ENCODE measurements at regions of chr5 and their contacts with region 1.

Region 1: GRCh38 chr5:138035605-138036537 is 3.0 kb upstream of the FAM13B start:
- DNase-seq: peak; percentile 74
- ATAC-seq: peak; percentile 74
- H3K4me3 Mint-ChIP-seq: no peak overlapping the region
- H3K27ac Mint-ChIP-seq: no peak overlapping the region
- H3K4me1 Mint-ChIP-seq: peaks cover 26% of the 10 kb centered on the region
- H3K27me3 Mint-ChIP-seq: no peaks in the 10 kb centered on the region

Region 2: GRCh38 chr5:137580030-137580429 is 455.8 kb before region 1 on chr5:
- CTCF ChIA-PET with region 1: no interaction called
- POLR2A ChIA-PET with region 1: no interaction called
- intact Hi-C with region 1: no loop called
- DNase-seq: no peak
- ATAC-seq: no peak
- H3K4me3 Mint-ChIP-seq: no peak overlapping the region
- H3K27ac Mint-ChIP-seq: no peak overlapping the region
- H3K4me1 Mint-ChIP-seq: no peaks in the 10 kb centered on the region
- H3K27me3 Mint-ChIP-seq: peaks cover 7% of the 10 kb centered on the region

Region 3: GRCh38 chr5:137754126-137754960 is 281.5 kb before region 1 on chr5 and contains the start of gene HNRNPA0:
- CTCF ChIA-PET with region 1: interaction called, 3 read pairs
- POLR2A ChIA-PET with region 1: no interaction called
- intact Hi-C with region 1: loop called (anchors 1 to 2 kb)
- DNase-seq: peak; percentile 98
- ATAC-seq: peak; percentile 87
- H3K4me3 Mint-ChIP-seq: peak within 1 kb of the TSS; percentile 77
- H3K27ac Mint-ChIP-seq: peak within 1 kb of the TSS; percentile 97
- H3K4me1 Mint-ChIP-seq: peaks cover 28% of the 10 kb centered on the region
- H3K27me3 Mint-ChIP-seq: no peaks in the 10 kb centered on the region
- total RNA-seq, gene HNRNPA0: 18.9 to 32.1 TPM

Region 4: DNA sequence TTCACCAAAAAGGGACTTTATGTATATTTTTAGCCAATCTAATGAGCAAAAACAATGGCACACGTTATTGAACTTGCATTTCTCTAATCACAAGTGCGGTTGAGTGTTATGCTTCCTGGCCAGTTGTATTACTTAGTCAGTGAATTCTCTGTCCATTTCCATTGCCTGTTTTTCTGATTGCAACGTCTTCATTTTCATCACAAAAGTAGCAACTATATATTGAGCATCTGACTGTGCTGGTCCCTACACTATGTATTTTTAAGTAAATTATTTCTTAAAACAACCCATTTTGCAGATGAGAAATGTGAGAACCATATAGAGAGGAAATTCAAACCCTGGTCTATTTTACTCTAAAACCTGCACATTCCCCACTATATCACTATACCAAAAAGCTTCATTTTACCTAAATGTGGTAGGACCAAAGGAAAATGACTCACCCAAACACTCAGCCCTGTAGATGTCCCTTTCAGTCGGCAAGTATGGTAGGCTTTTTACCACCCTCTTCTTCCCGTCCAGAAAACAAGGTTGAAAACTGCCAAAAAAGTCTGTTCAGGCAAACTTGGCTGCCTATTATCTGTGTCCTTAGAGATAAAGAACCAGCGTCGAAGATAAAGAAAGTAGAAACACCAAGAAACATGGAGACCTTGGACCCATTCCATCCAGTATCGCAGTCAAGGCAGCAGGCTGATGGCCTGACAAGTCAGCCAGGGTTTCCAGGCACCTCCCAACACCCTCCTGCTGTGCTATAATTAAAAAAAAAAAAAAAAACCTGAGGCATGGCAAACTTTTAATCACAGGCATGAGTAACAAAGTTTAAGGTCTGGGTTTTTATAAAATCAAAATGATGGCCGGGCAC is 15.8 kb after region 1 on chr5:
- CTCF ChIA-PET with region 1: interaction called, 10 read pairs
- POLR2A ChIA-PET with region 1: no interaction called
- intact Hi-C with region 1: no loop called
- DNase-seq: no peak
- ATAC-seq: no peak
- H3K4me3 Mint-ChIP-seq: no peak overlapping the region
- H3K27ac Mint-ChIP-seq: no peak overlapping the region
- H3K4me1 Mint-ChIP-seq: peaks cover 10% of the 10 kb centered on the region
- H3K27me3 Mint-ChIP-seq: peaks cover 6% of the 10 kb centered on the region

Region 5: GRCh38 chr5:138128334-138128733 is 92.5 kb after region 1 on chr5:
- CTCF ChIA-PET with region 1: interaction called, 21 read pairs
- POLR2A ChIA-PET with region 1: no interaction called
- intact Hi-C with region 1: loop called (anchors 1 kb)
- DNase-seq: no peak
- ATAC-seq: no peak
- H3K4me3 Mint-ChIP-seq: no peak overlapping the region
- H3K27ac Mint-ChIP-seq: no peak overlapping the region
- H3K4me1 Mint-ChIP-seq: peaks cover 2% of the 10 kb centered on the region
- H3K27me3 Mint-ChIP-seq: no peaks in the 10 kb centered on the region

Region 6: DNA sequence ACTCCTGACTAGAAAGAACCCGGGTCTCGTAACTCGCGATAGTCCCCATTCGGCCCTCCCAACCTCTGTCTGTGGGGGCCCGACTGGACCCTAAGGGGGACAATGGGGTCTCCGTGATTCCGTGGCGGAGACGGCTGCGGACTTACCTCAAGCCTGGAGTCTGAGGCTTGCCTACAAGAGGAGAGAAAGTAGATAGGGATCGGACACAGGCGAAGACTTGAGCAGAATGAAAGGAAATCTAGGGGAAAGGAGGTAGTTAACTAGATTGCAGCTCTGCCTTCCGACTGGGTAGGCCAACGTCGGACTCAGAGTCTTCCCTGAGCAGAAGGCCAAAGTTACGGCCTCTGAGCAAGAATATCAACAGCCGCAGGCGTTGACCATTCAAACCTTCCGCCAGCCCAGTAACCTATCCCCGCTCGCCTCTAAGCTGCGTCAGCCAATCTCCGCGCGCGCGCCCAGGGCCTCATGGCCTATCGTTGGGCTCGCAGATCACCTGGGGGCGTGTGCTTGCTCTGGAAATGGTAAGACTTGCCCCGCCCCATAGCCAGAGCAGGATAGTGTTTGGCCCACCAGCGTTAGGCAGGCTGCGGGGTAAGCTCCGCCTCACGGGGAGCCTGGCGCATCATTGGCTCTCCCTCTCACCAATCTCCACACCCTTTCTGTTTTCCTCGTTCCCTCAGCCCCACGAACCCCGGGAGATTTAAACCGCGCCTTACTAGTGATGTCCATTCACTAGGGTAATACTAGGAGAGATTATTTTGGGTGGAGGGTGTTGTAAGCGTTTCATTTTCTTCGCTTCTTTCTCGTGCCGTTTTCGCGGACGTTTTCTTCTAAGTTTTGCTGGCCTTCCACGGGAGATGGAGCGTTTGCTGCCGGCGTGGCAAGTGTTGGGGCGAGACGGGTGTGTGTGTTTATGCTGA is 295.8 kb after region 1 on chr5 and contains the start of gene CDC25C:
- CTCF ChIA-PET with region 1: no interaction called
- POLR2A ChIA-PET with region 1: no interaction called
- intact Hi-C with region 1: loop called (anchors 2 to 5 kb)
- DNase-seq: peak; percentile 98
- ATAC-seq: peak; percentile 100
- H3K4me3 Mint-ChIP-seq: peak within 1 kb of the TSS; percentile 86
- H3K27ac Mint-ChIP-seq: peak within 1 kb of the TSS; percentile 87
- H3K4me1 Mint-ChIP-seq: peaks cover 22% of the 10 kb centered on the region
- H3K27me3 Mint-ChIP-seq: no peaks in the 10 kb centered on the region
- total RNA-seq, gene CDC25C: 15.9 to 19.0 TPM

Region 7: GRCh38 chr5:138491669-138492559 is 456.0 kb after region 1 on chr5:
- CTCF ChIA-PET with region 1: no interaction called
- POLR2A ChIA-PET with region 1: no interaction called
- intact Hi-C with region 1: loop called in 1 of 2 experiments (anchors 1 kb)
- DNase-seq: peak; percentile 92
- ATAC-seq: peak; percentile 99
- H3K4me3 Mint-ChIP-seq: peak overlapping the region; percentile 84
- H3K27ac Mint-ChIP-seq: peak overlapping the region; percentile 79
- H3K4me1 Mint-ChIP-seq: peaks cover 15% of the 10 kb centered on the region
- H3K27me3 Mint-ChIP-seq: peaks cover 23% of the 10 kb centered on the region

Measured in activated CD4-positive, alpha-beta T cell treated with anti-CD3 and anti-CD28 coated beads for 36 hours (primary cell).